ENCODE measurements at regions of chr14 and their contacts with region 1.

Region 1: GRCh38 chr14:81170104-81170828 is 50.5 kb downstream of the GTF2A1 start:
- DNase-seq: peak; percentile 90
- H3K4me3 Mint-ChIP-seq: peak overlapping the region; percentile 84
- H3K27ac Mint-ChIP-seq: peak overlapping the region; percentile 89
- H3K4me1 Mint-ChIP-seq: peaks cover 46% of the 10 kb centered on the region
- H3K27me3 Mint-ChIP-seq: no peaks in the 10 kb centered on the region

Region 2: DNA sequence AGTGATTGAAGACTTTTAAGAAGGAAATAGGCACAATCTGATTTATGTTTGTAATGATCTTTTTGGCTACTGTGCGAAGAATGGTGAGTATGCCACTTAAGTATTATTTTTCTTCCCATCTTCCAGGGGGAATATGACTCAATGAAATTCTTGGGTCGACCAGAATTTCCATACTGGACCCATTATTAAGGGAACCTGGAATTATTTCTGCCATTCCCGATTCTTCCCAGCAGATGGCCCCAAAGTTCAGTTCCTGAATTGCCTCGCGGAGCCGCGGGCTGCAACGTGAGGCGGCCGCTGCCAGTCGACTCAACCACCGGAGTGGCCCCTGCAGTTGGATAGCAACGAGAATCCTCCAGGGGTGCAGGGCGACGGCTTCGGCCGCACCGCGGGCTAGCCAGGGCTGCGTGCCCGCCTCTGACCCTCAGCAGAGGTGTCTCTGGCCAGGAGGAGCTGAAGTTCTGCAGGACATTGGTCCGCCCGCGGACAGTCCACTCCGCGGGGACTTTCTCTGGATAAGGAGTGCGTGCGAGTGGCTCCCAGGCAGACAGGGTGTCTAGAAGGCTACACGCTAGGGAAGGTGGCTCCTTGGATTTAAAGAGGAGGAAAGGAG is 215.5 kb before region 1 on chr14:
- CTCF ChIA-PET with region 1: interaction called, 33 read pairs
- POLR2A ChIA-PET with region 1: interaction called, 8 read pairs
- DNase-seq: peak; percentile 79
- H3K4me3 Mint-ChIP-seq: peak overlapping the region; percentile 78
- H3K27ac Mint-ChIP-seq: peak overlapping the region; percentile 37
- H3K4me1 Mint-ChIP-seq: peaks cover 51% of the 10 kb centered on the region
- H3K27me3 Mint-ChIP-seq: peaks cover 20% of the 10 kb centered on the region

Region 3: DNA sequence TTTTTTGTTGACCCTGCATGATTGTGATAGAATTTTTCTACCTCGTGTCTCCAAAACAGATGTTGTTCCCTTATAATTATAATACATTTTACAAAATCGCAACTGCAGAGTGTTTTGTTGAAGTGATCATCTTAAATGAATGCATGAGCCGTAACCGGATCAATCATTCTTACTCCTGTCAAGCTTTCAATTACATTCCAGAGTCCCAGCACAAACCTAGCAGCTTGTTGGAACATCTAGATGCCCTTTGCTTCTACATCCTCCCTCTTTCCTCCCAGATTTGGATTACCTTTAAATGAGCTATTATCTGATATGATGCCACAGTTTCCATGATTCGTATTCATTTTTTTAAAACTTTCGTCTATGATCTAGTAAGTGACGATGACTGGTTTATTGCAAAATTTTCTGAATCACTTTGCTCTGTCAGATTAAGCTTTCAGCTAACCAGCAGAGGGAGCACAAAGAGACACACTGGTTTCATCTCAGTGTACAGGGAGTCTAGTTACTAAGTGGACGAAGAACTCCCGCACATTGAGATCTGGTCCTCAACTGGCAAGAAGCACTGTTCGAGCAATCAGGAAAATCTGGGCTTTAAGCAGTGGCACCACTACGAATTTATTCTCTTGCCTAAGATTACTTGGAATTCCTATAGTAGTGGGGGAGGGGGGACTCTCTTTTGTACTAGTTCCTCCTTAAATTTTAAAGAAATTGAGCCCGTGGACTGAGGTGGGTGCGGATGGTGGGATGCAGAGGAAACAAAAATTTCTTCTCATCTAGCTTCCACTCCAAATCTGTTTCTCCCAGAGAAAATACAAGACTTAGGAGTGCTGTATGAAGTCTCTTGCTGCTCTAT is 174.0 kb before region 1 on chr14:
- CTCF ChIA-PET with region 1: interaction called, 31 read pairs
- POLR2A ChIA-PET with region 1: interaction called, 4 read pairs
- DNase-seq: peak; percentile 24
- H3K4me3 Mint-ChIP-seq: no peak overlapping the region
- H3K27ac Mint-ChIP-seq: no peak overlapping the region
- H3K4me1 Mint-ChIP-seq: peaks cover 7% of the 10 kb centered on the region
- H3K27me3 Mint-ChIP-seq: peaks cover 35% of the 10 kb centered on the region

Region 4: DNA sequence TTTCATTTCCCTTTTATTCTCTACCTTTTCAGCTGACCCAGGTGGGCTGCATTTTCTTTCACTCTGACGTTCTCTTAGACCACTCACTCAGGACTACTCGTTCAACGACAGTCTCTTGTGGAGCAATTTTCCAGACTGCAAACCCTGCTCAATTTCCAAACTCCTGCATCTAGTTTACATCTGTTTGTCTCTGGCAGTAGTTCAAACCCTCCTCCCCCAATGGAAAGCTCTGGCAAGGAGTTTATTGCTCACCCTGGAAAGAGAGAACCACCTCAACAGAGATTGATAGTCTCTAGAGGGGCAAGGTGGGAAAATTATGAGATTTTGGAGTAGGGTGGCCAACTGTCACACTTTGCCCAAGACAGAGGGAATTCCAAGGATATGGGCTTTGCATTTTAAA is 84.7 kb before region 1 on chr14:
- CTCF ChIA-PET with region 1: no interaction called
- POLR2A ChIA-PET with region 1: no interaction called
- DNase-seq: no peak
- H3K4me3 Mint-ChIP-seq: no peak overlapping the region
- H3K27ac Mint-ChIP-seq: no peak overlapping the region
- H3K4me1 Mint-ChIP-seq: no peaks in the 10 kb centered on the region
- H3K27me3 Mint-ChIP-seq: no peaks in the 10 kb centered on the region

Region 5: GRCh38 chr14:81122326-81122725 is 47.9 kb before region 1 on chr14:
- CTCF ChIA-PET with region 1: no interaction called
- POLR2A ChIA-PET with region 1: no interaction called
- DNase-seq: no peak
- H3K4me3 Mint-ChIP-seq: no peak overlapping the region
- H3K27ac Mint-ChIP-seq: no peak overlapping the region
- H3K4me1 Mint-ChIP-seq: peaks cover 7% of the 10 kb centered on the region
- H3K27me3 Mint-ChIP-seq: no peaks in the 10 kb centered on the region

Region 6: DNA sequence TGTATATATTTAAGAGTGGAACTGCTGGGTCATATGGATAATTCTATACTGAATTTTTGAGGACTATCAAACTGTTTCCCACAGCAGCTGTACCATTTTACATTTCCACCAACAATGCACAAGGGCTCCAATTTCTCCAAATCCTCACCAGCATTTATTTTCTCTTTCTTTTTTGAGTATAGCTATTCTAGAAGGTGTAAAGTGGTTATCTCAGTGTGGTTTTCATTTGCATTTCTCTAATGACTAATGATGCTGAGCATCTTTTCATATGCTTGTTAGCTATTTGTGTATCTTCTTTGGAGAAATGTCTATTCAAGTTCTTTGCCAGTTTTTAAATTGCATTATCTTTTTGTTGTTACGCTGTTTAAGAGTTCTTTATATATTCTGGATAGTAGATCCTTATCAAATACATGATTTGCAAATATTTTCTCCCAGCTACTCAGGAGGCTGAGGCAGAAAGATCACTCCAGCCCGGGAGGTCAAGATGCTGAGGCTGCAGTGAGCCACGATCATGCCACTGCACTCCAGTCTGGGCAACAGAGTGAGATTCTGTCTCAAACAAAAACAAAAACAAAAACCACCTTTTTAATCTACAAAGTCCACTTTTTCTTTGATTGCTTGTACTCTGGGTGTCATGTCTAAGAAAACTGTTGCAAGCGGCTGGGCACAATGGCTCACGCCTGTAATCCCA is 17.7 kb after region 1 on chr14:
- CTCF ChIA-PET with region 1: interaction called, 14 read pairs
- POLR2A ChIA-PET with region 1: interaction called, 20 read pairs
- DNase-seq: no peak
- H3K4me3 Mint-ChIP-seq: no peak overlapping the region
- H3K27ac Mint-ChIP-seq: peak overlapping the region; percentile 35
- H3K4me1 Mint-ChIP-seq: peaks cover 54% of the 10 kb centered on the region
- H3K27me3 Mint-ChIP-seq: no peaks in the 10 kb centered on the region

Region 7: GRCh38 chr14:81193924-81194633 is 23.8 kb after region 1 on chr14:
- CTCF ChIA-PET with region 1: interaction called, 16 read pairs
- POLR2A ChIA-PET with region 1: interaction called, 20 read pairs
- DNase-seq: peak; percentile 38
- H3K4me3 Mint-ChIP-seq: no peak overlapping the region
- H3K27ac Mint-ChIP-seq: peak overlapping the region; percentile 52
- H3K4me1 Mint-ChIP-seq: peaks cover 44% of the 10 kb centered on the region
- H3K27me3 Mint-ChIP-seq: no peaks in the 10 kb centered on the region

Measured in activated CD4-positive, alpha-beta memory T cell treated with anti-CD3 and anti-CD28 coated beads, Interleukin-2, amount 10 ng/mL, durations not matched to agents 7 days and 5 days (primary cell).